ENCODE measurements at regions of chr3 and their contacts with region 1.

Region 1: DNA sequence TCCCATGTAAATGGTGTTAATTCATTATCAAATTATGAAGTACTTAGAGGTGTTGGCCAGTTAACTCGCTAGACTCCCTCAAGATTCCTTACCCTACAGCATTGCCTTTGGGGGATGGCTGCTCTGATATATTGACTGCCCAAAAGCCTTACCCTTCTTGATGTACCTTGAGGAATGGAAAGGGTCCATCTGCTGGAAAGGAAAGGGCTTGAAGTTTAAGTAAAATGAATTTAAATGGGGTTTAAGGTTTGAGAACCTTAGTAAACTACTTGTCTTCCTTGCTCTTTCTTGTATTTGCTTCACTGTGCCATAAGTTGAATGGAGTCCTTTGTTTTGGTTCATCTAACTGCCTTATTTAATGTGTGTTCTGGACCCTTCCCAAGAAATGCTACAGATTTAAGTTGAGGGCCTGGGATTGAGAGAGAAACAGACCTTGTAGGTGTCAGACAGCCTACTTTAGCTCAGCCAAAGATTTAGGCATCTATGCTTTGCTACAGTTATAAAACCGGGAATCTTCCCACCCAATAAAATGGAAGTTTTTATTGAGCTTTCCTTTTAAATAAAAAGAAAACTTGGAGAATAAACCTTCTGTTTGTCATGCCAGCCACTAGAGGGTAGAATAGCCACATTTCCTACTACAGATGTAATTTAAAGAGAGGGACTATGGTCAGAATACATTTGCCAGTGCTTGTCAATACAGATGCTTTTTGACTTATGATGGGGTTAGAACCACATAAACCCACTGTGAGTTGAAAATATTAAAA is 25.3 kb downstream of the CMSS1 start:
- DNase-seq: peak in 1 of 2 experiments; percentile 64
- H3K4me3 ChIP-seq: no peak overlapping the region
- H3K27ac ChIP-seq: no peak overlapping the region
- H3K4me1 ChIP-seq: peaks cover 24% of the 10 kb centered on the region
- H3K27me3 ChIP-seq: no peaks in the 10 kb centered on the region
- CTCF ChIP-seq: peak; percentile 98

Region 2: DNA sequence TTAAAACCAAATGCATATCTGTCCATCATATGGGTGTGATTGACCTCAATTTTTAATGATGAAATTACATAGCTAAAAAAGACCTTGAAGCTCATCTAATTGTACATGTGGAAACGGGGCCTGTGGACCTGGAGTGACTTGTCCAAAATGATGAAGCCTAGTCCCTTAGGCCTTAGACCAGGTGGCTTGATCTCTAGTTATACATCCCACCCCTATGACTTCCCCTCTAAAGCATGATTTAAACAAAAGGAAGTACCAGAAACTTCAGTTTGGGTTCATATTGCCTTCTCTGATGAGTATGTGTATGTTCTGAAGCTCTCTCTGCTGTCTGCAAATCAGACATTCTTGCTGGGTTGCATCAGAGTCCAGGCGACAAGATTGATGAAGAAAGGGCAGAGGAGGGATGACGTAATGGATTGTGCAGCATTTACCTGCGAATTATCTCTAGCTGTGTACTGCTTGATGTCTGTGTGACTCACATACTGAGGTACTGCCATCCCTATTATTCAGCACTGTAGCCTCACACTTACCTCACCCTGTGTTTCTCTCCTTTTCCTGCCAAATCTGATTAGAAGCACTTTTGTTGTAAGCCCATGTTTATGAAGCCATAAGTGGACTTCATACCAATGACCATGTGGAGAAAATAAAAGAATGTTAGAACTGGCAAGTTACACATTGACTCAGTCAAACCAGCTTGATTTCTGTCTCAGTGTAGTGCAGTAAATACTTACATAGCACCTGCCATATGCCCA is 159.8 kb after region 1 on chr3:
- CTCF ChIA-PET with region 1: interaction called, 4 read pairs
- POLR2A ChIA-PET with region 1: no interaction called
- intact Hi-C with region 1: loop called (anchors 1 kb)
- DNase-seq: peak; percentile 79 to 100
- H3K4me3 ChIP-seq: no peak overlapping the region
- H3K27ac ChIP-seq: peak overlapping the region; percentile 60
- H3K4me1 ChIP-seq: peaks cover 57% of the 10 kb centered on the region
- H3K27me3 ChIP-seq: no peaks in the 10 kb centered on the region
- CTCF ChIP-seq: no peak

Region 3: DNA sequence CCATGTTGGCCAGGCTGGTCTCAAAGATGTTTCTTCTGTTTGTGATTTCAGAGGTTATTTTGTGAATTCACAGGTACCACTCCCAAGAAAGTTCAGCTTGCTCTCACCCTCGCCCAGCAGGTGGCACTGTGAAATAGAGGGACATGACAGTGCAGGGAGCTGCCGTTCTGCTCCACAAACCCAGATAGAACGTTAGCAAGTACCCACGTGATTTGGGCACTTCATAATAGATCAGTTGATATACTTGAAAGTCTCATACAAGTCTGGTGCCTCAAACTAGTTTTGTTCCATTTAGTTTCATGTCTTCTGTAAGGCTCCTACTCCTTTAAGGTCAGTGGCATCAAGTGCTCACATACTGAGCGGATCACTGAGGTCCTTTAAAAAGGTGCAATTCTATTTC is 225.8 kb after region 1 on chr3:
- CTCF ChIA-PET with region 1: interaction called, 5 read pairs
- POLR2A ChIA-PET with region 1: no interaction called
- intact Hi-C with region 1: loop called (anchors 2 kb)
- DNase-seq: peak; percentile 46 to 73
- H3K4me3 ChIP-seq: no peak overlapping the region
- H3K27ac ChIP-seq: no peak overlapping the region
- H3K4me1 ChIP-seq: no peaks in the 10 kb centered on the region
- H3K27me3 ChIP-seq: no peaks in the 10 kb centered on the region
- CTCF ChIP-seq: peak; percentile 81

Region 4: GRCh38 chr3:100254168-100254777 is 411.3 kb after region 1 on chr3:
- CTCF ChIA-PET with region 1: interaction called, 29 read pairs
- POLR2A ChIA-PET with region 1: no interaction called
- intact Hi-C with region 1: loop called (anchors 1 kb)
- DNase-seq: peak; percentile 53 to 67
- H3K4me3 ChIP-seq: no peak overlapping the region
- H3K27ac ChIP-seq: no peak overlapping the region
- H3K4me1 ChIP-seq: peaks cover 10% of the 10 kb centered on the region
- H3K27me3 ChIP-seq: no peaks in the 10 kb centered on the region
- CTCF ChIP-seq: peak; percentile 93

Measured in PC-9 (cell line).